H1 (cell line): ENCODE measurements at regions of chr13 and their contacts with region 1.

Region 1: DNA sequence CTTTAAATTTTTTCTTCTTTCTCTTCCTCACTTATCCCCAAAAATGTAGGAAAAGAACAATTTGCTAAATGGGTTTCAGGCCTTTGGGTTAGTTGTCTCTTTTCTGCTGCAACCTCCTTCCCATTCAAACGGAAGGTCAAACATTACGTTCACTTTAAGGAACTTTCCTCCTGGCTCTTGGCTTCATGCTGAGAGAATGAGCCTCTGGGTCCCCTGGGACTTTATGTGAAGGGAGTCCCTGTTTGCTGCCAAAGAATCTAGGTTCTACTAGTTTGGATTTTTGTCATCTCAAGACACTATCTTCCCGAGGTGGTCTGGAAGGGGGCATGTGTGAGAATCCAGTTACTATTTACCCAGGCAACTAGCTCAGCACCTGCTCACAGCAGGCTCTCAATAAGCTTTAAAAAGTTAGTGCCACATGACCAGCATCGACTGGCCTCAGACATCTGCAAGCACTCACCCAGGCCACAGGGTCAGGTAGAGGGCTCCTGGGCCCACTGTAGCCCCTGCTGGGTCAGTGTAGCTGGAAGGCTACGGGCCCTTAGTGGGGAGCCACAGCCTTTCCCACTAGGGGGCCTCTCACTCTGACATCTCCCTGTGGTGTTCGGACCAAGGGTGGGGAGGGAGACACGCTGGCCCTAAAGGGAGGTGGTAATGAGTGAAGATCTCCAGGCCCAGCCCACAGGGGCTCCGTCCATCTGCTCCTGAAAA is 40.5 kb downstream of the FAM124A start:
- DNase-seq: no peak
- H3K4me3 ChIP-seq: no peak overlapping the region
- H3K27ac ChIP-seq: no peak overlapping the region
- H3K4me1 ChIP-seq: peaks cover 5 to 22% (median 14%) of the 10 kb centered on the region in 4 experiments; a peak in 6 of 7 replicates
- H3K27me3 ChIP-seq: no peaks in the 10 kb centered on the region
- CTCF ChIP-seq: no peak
- EP300 ChIP-seq: no peak
- POLR2A ChIP-seq: no peak
- RAD21 ChIP-seq: no peak

Region 2: DNA sequence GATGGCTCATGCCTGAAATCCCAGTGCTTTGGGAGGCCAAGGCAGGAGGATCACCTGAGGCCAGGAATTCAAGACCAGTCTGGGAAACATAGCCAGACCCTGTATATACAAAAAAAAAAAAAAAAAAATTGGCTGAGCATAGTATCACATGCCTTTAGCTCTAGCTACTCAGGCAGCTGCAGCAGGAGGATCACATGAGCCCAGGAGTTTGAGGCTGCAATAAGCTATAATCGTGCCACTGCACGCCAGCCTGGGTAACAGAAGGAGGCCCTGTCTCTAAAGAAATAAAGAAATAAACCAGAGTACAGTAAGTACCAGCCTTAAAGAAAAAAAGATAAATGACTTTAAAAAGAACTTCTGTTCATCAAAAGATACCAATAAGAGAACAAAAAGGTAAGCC is 12.4 kb after region 1 on chr13:
- CTCF ChIA-PET with region 1: interaction called, 11 read pairs
- POLR2A ChIA-PET with region 1: interaction called, 7 read pairs
- DNase-seq: peak in 1 of 2 experiments; percentile 10
- H3K4me3 ChIP-seq: no peak overlapping the region
- H3K27ac ChIP-seq: no peak overlapping the region
- H3K4me1 ChIP-seq: peaks cover 0 to 7% (median 3%) of the 10 kb centered on the region in 4 experiments; a peak in 4 of 7 replicates
- H3K27me3 ChIP-seq: no peaks in the 10 kb centered on the region
- CTCF ChIP-seq: no peak
- EP300 ChIP-seq: no peak
- POLR2A ChIP-seq: no peak
- RAD21 ChIP-seq: no peak

Region 3: DNA sequence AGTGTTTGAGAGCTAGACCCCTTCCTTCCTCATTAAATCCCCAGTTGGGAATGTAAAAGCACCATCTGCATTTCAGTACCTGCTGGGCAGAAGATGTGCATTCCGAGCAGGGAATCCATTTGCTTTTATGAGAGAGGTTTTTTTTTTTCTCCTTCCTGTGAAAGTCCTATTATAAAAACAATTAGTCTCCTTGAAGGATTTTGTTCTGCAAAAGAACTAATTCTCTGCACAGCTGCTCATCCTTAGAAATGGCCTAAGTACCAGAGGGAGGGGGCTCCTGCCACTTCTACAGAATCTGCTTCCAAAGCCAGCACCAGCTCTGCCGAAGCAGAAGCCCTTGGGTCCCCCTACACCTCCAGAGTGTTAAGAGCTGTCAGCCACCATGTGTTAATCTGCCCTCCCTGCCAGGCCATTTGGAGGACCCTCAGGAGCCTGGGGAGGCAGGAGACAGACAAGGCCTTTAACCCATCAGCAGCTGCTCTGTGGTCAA is 40.5 kb after region 1 on chr13:
- CTCF ChIA-PET with region 1: no interaction called
- POLR2A ChIA-PET with region 1: no interaction called
- DNase-seq: peak in 1 of 2 experiments; percentile 75
- H3K4me3 ChIP-seq: peak overlapping the region in 1 of 4 experiments; percentile 23; a peak in 1 of 8 replicates
- H3K27ac ChIP-seq: peak overlapping the region; percentile 33; the same call in 1 of the 2 replicates
- H3K4me1 ChIP-seq: peaks cover 11 to 32% (median 28%) of the 10 kb centered on the region in 4 experiments
- H3K27me3 ChIP-seq: no peaks in the 10 kb centered on the region
- CTCF ChIP-seq: no peak
- EP300 ChIP-seq: peak in 1 of 2 experiments; percentile 65; a peak in 1 of 3 replicates
- POLR2A ChIP-seq: no peak
- RAD21 ChIP-seq: no peak; a peak in 1 of 4 replicates

Region 4: DNA sequence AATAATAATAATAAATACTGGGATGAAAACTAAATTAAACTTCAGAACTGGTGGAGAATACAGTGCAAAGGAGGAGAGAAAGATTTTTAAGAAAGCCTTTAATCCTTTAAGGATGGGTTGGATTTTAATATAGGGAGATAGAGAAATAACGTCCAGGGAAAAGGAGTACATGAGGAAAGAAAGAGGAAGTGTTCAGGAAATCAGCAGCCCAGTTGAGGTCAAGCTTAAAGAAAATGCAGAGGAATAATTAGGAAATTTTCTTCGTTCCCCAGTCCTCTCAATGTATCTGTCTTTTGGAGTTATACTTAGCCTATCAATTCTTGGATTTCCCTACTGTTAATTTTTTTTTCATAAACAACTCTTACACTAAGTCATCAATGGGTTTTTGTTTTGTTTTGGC is 142.5 kb after region 1 on chr13:
- CTCF ChIA-PET with region 1: no interaction called
- POLR2A ChIA-PET with region 1: no interaction called
- DNase-seq: no peak
- H3K4me3 ChIP-seq: no peak overlapping the region
- H3K27ac ChIP-seq: no peak overlapping the region
- H3K4me1 ChIP-seq: no peaks in the 10 kb centered on the region
- H3K27me3 ChIP-seq: no peaks in the 10 kb centered on the region
- CTCF ChIP-seq: no peak
- EP300 ChIP-seq: no peak
- POLR2A ChIP-seq: no peak
- RAD21 ChIP-seq: no peak